ENCODE measurements at regions of chr12 and their contacts with region 1.

Region 1: GRCh38 chr12:119964929-119965328 is 24.1 kb upstream of the BICDL1 start:
- DNase-seq: no peak
- ATAC-seq: no peak
- H3K4me3 ChIP-seq: no peak overlapping the region
- H3K27ac ChIP-seq: no peak overlapping the region
- H3K4me1 ChIP-seq: no peaks in the 10 kb centered on the region
- H3K27me3 ChIP-seq: peaks cover 0 to 18% (median 0%) of the 10 kb centered on the region in 7 donors
- CTCF ChIP-seq: no peak

Region 2: DNA sequence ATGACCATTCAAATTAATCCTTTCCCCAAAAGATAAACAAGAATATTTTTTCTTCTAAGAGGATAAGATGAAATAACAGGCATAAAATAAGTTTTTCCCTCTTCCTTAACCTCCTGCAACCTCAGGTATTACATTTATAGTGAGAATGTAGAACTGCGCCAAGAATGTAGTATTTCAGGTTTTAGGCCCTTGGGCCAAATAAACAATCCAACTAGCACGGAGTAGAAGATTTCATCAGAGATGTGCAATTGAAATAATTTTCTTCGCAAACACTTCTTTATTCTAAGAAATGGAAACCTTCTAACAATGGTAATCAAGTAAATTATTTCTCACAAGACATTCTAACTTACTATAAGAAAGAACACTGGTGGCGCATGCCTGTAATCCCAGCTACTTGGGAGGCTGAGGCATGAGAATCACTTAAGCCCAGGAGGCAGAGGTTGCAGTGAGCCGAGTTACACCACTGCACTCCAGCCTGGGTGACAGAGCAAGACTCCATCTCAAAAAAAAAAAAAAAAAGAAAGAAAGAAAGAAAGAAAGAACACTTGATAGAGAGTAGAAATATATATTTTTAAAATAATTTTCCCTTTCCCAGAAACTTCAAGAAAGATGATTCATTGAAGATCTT is 1693.0 kb before region 1 on chr12:
- intact Hi-C with region 1: loop called in 1 of 10 experiments (anchors 5 kb)
- DNase-seq: no peak
- ATAC-seq: no peak
- H3K4me3 ChIP-seq: no peak overlapping the region
- H3K27ac ChIP-seq: no peak overlapping the region
- H3K4me1 ChIP-seq: no peaks in the 10 kb centered on the region
- H3K27me3 ChIP-seq: no peaks in the 10 kb centered on the region
- CTCF ChIP-seq: no peak

Region 3: DNA sequence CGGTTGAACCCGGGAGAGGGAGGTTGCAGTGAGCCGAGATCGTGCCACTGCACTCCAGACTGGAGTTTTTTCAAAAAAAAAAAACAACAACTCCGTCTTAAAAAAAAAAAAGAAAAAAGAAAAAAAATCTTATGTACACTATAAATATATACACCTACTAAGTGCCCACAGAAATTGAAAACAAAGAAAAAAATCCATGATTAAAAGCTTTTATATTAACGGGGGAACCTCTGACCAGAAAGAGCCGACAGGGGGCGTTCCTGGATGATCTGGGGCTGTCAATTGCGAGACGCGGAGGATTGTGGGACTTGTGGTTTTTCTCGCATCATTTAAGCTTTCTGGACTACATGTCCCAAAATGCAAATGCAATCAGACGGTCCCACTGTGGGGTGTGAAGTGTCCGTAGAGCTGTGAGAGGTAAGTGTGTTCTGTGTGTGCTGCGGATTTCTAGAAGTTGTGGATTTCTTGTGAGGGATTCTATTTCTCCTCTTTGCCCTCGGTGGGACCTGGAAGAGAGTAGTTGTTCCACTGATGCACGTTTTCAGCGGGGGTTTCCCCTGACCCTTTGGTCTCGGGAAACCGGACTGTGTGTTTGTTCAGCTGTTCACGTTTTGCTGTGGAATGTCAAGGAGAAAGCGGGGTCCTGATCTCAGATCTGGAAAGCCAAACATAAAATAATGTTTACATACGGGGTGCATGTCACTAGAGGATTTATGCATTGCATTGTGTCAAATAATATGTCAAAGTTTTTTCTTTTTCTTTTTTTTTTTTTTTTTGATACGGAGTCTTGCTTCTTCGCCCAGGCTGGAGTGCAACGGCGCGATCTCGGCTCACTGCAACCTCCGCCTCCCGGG is 337.3 kb after region 1 on chr12 and contains the start of gene SIRT4:
- intact Hi-C with region 1: no loop called
- DNase-seq: peak; percentile 79 to 94
- ATAC-seq: peak; percentile 88 to 98 (median 98)
- H3K4me3 ChIP-seq: peak within 1 kb of the TSS; percentile 46 to 82 (median 64)
- H3K27ac ChIP-seq: peak within 1 kb of the TSS; percentile 27 to 90 (median 79)
- H3K4me1 ChIP-seq: peaks cover 0 to 8% (median 6%) of the 10 kb centered on the region in 9 donors
- H3K27me3 ChIP-seq: no peaks in the 10 kb centered on the region
- CTCF ChIP-seq: peak; percentile 72 to 94 (median 88)
- total RNA-seq, gene SIRT4: 3.7 to 9.0 (median 4.7) TPM

Region 4: DNA sequence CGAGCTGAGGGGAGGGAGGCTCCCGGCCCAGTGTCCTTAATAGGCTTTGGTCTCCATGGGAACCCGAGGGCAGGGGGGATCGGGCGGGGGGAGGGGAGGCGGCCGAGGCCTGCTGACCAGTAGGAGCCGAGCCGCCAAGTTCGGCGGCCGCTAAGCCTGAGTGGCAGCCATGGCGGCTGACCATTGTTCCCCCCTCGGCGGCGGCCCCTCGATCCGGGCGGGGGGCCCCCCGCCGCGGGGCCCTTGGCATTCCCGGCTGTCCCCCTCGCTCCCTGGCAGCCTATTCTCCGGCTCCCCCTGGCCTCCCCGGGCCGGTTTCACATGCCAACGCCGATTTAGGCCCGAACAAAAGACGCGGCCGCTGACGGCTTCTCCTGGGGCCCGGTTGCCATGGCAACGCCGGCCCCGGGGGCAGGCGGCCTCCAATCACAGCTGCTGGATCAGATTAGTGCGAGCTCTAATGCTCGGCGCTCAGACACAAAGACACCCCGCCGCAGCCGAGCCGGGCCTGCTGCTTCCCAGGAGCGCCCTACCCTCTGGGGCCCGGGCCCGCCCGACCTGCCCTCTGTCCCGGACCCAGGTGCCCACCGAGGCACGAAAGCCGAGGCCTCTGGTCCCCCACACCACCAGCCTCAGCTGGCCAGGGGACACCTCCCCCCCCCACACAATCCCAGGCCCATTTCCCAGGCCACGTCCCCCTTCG is 396.7 kb after region 1 on chr12:
- intact Hi-C with region 1: no loop called
- DNase-seq: peak; percentile 56 to 71
- ATAC-seq: peak; percentile 27 to 78 (median 62)
- H3K4me3 ChIP-seq: peak overlapping the region in 9 of 10 donors; percentile 29 to 54 (median 40)
- H3K27ac ChIP-seq: peak overlapping the region in 5 of 10 donors; percentile 26 to 65 (median 53)
- H3K4me1 ChIP-seq: peaks cover 0 to 19% (median 2%) of the 10 kb centered on the region in 9 donors
- H3K27me3 ChIP-seq: peaks cover 0 to 56% (median 4%) of the 10 kb centered on the region in 7 donors
- CTCF ChIP-seq: no peak